H1 (cell line): ENCODE measurements at regions of chr2 and their contacts with region 1.

Region 1: GRCh38 chr2:215931256-215931903 is 82.0 kb downstream of the MREG start:
- DNase-seq: peak in 1 of 2 experiments; percentile 87
- H3K4me3 ChIP-seq: no peak overlapping the region
- H3K27ac ChIP-seq: no peak overlapping the region
- H3K4me1 ChIP-seq: peaks cover 2 to 6% (median 3%) of the 10 kb centered on the region in 4 experiments; a peak in 4 of 7 replicates
- H3K27me3 ChIP-seq: no peaks in the 10 kb centered on the region
- CTCF ChIP-seq: peak in 2 of 3 experiments; percentile 88 to 94; a peak in 3 of 4 replicates
- EP300 ChIP-seq: no peak
- POLR2A ChIP-seq: no peak
- RAD21 ChIP-seq: peak; percentile 96 to 99

Region 2: GRCh38 chr2:215590010-215590745 is 341.2 kb before region 1 on chr2:
- CTCF ChIA-PET with region 1: no interaction called
- POLR2A ChIA-PET with region 1: no interaction called
- DNase-seq: no peak
- H3K4me3 ChIP-seq: no peak overlapping the region
- H3K27ac ChIP-seq: no peak overlapping the region
- H3K4me1 ChIP-seq: no peaks in the 10 kb centered on the region
- H3K27me3 ChIP-seq: no peaks in the 10 kb centered on the region
- CTCF ChIP-seq: no peak
- EP300 ChIP-seq: no peak
- POLR2A ChIP-seq: no peak
- RAD21 ChIP-seq: no peak

Region 3: DNA sequence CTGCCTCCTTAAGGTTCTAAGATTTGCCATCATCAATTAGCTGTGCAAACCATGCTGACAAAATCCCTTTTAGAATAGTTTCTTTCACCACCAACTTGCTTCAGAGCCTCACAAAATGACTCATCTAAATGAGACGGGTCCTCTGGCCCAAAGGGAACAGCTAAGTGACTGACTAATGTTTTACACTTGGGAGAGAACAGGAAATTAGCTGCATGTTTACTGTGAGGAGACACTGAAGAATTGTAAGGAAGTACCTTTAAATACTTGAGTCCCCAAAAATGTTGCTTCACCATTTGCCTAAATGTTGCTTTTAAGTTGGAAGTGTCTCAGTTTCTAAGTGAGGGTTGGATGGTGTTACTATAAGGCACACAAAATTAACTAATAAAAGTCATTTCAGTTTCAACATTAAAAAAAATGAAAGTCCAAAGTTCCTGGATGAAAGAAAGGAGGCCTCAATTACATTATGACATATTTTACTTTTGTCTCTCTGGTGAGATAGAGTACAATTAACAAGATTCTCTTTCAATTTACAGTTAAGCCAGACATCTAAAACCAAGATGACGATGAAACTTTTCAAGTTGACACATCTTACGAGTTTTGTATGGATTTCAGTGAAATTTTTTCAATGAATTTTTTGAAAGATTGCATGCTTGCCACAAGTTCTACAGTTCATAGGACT is 266.4 kb before region 1 on chr2:
- CTCF ChIA-PET with region 1: no interaction called
- POLR2A ChIA-PET with region 1: no interaction called
- DNase-seq: no peak
- H3K4me3 ChIP-seq: no peak overlapping the region
- H3K27ac ChIP-seq: no peak overlapping the region
- H3K4me1 ChIP-seq: no peaks in the 10 kb centered on the region
- H3K27me3 ChIP-seq: no peaks in the 10 kb centered on the region
- CTCF ChIP-seq: no peak
- EP300 ChIP-seq: no peak
- POLR2A ChIP-seq: no peak
- RAD21 ChIP-seq: no peak

Region 4: DNA sequence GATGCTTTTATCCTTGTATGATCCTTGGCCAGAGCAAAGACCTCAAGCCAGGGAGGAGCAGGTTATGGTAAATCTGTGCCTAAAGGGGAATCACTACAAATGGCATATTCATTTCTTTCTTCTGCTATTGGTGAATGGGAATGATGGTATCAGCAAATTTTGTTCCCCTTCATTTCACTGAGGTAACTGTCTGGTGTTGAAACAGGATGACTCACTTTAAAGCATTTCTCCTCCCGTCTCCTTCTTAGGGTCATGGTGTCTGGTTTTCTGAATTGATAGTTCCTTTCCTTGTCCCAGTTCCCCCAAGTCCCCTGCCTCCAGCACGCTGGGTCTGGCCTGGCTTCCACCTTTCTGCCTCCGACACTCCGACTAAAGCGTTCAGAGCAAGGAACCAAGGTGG is 27.3 kb before region 1 on chr2:
- CTCF ChIA-PET with region 1: interaction called, 17 read pairs
- POLR2A ChIA-PET with region 1: no interaction called
- DNase-seq: no peak
- H3K4me3 ChIP-seq: no peak overlapping the region
- H3K27ac ChIP-seq: no peak overlapping the region
- H3K4me1 ChIP-seq: no peaks in the 10 kb centered on the region
- H3K27me3 ChIP-seq: 0 out of 7 replicates have a peak, but pooled peaks cover 0 to 2% (median 0%) of the 10 kb centered on the region in 4 experiments
- CTCF ChIP-seq: no peak
- EP300 ChIP-seq: no peak
- POLR2A ChIP-seq: no peak
- RAD21 ChIP-seq: no peak

Region 5: DNA sequence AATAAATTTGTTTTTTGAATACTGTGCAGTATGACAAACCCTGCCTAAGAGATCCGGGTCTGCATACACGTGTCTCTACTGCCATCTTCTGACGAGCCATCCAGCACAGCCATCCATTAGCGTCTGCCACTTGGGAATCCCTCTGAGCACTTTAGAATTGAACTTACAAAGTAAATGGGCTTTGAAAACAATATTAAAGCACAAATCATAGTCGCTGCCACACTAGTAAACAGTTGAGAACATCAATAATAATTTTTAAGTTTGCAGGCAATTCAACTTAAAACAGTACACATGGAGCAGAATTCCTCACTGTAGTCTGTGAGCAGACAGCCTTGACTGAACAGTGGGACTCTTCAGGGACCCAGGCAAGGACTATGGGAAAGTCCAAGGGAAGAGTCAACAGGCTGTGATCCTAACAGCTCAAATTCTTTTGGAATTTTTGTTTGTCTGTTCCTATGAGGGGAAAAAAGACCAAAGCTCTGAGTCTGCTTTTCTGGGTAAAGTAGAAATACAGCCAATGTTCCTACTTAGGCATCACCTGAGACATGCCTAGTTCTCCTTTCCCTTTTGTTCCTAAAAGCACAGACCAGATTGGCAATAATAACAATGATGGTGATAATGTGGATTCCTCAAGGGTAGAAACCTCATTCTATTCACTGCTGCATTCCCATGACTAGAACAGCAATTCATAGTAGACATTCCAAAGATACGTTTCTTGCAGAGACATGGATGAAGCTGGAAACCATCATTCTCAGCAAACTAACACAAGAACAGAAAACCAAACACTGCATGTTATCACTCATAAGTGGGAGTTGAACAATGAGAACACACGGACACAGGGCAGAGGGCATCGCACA is 10.9 kb before region 1 on chr2:
- CTCF ChIA-PET with region 1: interaction called, 29 read pairs
- POLR2A ChIA-PET with region 1: interaction called, 5 read pairs
- DNase-seq: peak in 1 of 2 experiments; percentile 64
- H3K4me3 ChIP-seq: no peak overlapping the region
- H3K27ac ChIP-seq: no peak overlapping the region
- H3K4me1 ChIP-seq: peaks cover 0 to 16% (median 6%) of the 10 kb centered on the region in 4 experiments; a peak in 3 of 7 replicates
- H3K27me3 ChIP-seq: no peaks in the 10 kb centered on the region
- CTCF ChIP-seq: peak; percentile 80 to 88 (median 81)
- EP300 ChIP-seq: no peak
- POLR2A ChIP-seq: no peak
- RAD21 ChIP-seq: peak; percentile 98

Region 6: DNA sequence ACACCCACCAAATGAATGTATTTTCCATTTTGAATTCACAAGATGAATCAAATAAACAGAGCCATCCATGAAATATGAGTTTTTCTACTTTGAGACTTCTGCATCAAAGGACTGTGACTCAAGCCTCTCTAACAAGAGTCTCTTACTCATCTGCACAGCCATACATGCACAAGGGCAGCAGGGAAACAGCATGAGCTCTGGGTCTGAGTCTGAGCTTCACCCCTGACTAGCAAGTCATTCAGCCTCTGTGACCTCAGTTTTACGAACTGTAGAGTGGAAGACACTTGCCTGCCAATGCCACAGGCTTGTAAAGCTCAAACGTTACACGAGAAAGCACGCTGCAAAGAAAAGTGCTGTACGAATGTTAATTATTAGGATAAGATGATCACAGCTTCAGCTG is 39.0 kb after region 1 on chr2:
- CTCF ChIA-PET with region 1: no interaction called
- POLR2A ChIA-PET with region 1: no interaction called
- DNase-seq: no peak
- H3K4me3 ChIP-seq: no peak overlapping the region
- H3K27ac ChIP-seq: no peak overlapping the region
- H3K4me1 ChIP-seq: peaks cover 0 to 14% (median 7%) of the 10 kb centered on the region in 4 experiments; a peak in 3 of 7 replicates
- H3K27me3 ChIP-seq: no peaks in the 10 kb centered on the region
- CTCF ChIP-seq: no peak
- EP300 ChIP-seq: no peak
- POLR2A ChIP-seq: no peak
- RAD21 ChIP-seq: no peak